Breast epithelium (tissue), 4 donors: ENCODE measurements at regions of chr1 and their contacts with region 1.

Region 1: DNA sequence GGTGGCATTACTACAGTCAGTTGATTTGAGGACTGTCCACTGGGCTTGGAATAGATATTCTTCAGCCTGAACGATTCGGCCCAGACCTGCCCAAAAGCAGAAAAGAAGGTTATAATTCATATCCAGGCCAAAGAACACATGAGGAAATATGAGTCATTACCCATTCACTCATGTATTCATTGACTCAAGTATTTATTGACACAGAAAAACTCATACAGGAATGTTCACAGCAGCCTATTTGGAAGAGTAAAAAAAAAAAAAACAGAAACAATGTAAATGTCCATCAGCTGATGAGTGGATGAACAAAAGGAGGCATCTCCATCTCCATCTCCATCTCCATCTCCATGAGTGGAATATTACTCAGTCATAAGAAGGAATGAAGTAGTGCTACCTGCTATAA is 15.9 kb downstream of the ZMYND12 start:
- DNase-seq: no peak
- H3K4me3 ChIP-seq: no peak overlapping the region
- H3K27ac ChIP-seq: no peak overlapping the region
- H3K4me1 ChIP-seq: no peaks in the 10 kb centered on the region
- H3K27me3 ChIP-seq: no peaks in the 10 kb centered on the region
- CTCF ChIP-seq: no peak
- POLR2A ChIP-seq: no peak

Region 2: DNA sequence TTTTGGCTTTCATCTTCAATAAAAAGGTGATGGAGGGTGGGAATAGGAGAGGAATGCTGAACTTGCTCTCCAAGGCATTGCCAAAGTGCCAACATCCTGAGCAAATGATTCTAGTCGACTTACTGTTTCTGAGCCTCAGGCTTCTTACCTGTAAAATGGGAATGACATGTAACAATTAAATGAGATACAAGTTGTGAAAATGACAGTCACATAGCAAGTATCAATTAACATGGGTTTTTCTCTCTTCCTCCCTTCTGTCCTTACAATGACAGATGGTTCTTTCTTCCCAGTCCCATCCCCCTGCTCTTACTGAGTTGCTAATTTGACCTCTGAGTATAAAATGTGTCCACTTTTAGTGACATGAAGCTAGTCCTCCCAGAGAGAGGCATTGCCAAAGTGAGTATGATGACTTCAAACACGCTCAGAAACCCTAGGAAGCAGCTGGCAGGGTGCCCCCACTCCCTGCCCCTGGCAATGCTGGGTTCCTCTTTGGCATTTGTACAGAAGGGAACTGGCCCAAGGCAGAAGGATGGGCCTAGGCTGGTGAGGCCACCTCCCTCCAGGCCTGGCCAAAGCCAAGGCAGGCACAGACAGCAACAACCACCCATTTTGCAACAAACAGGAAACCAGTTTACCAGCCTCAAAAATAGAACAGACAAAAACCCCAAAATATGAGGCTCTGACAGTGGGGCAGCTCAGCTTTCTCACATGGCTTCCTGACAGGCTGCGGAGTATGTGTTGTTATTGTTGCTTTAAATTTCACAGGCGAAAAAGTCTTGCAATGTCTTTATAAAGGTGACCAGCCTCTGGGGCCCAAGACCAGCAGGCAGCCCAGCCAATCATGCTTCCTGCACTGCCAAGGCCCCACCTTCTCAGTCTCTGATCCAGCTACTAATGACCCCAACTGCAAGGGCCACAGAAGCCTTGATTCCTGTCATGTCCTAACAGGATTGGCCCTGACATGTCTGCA is 637.1 kb before region 1 on chr1:
- intact Hi-C with region 1: loop called (anchors 5 kb)
- DNase-seq: peak; percentile 62 to 82
- H3K4me3 ChIP-seq: no peak overlapping the region
- H3K27ac ChIP-seq: peak overlapping the region; percentile 75 to 87
- H3K4me1 ChIP-seq: peaks cover 0 to 9% of the 10 kb centered on the region in 2 donors
- H3K27me3 ChIP-seq: no peaks in the 10 kb centered on the region
- CTCF ChIP-seq: no peak
- POLR2A ChIP-seq: no peak

Region 3: GRCh38 chr1:41870076-41870562 is 569.8 kb before region 1 on chr1:
- intact Hi-C with region 1: loop called (anchors 5 kb)
- DNase-seq: no peak
- H3K4me3 ChIP-seq: no peak overlapping the region
- H3K27ac ChIP-seq: no peak overlapping the region
- H3K4me1 ChIP-seq: no peaks in the 10 kb centered on the region
- H3K27me3 ChIP-seq: no peaks in the 10 kb centered on the region
- CTCF ChIP-seq: no peak
- POLR2A ChIP-seq: no peak